ENCODE measurements at regions of chr21 and their contacts with region 1.

Region 1: GRCh38 chr21:46424039-46424591 is 34.6 kb upstream of the DIP2A start:
- DNase-seq: peak in 8 of 9 experiments; percentile 25 to 82 (median 52)
- ATAC-seq: peak; percentile 12
- H3K4me3 ChIP-seq: peak overlapping the region; percentile 18 to 30
- H3K4me3 Mint-ChIP-seq: peak overlapping the region; percentile 82
- H3K27ac ChIP-seq: peak overlapping the region; percentile 84 to 93
- H3K27ac Mint-ChIP-seq: peak overlapping the region; percentile 98
- H3K4me1 ChIP-seq: peaks cover 44% of the 10 kb centered on the region
- H3K4me1 Mint-ChIP-seq: peaks cover 35% of the 10 kb centered on the region
- H3K27me3 ChIP-seq: no peaks in the 10 kb centered on the region
- H3K27me3 Mint-ChIP-seq: no peaks in the 10 kb centered on the region
- CTCF ChIP-seq: no peak

Region 2: GRCh38 chr21:46368533-46369285 is 55.4 kb before region 1 on chr21:
- CTCF ChIA-PET with region 1: no interaction called
- POLR2A ChIA-PET with region 1: no interaction called
- intact Hi-C with region 1: loop called in 1 of 2 experiments (anchors 5 kb)
- DNase-seq: peak in 8 of 9 experiments; percentile 20 to 85 (median 52)
- ATAC-seq: peak; percentile 90
- H3K4me3 ChIP-seq: peak overlapping the region in 1 of 2 experiments; percentile 15
- H3K4me3 Mint-ChIP-seq: peak overlapping the region; percentile 40
- H3K27ac ChIP-seq: peak overlapping the region in 1 of 2 experiments; percentile 19
- H3K27ac Mint-ChIP-seq: peak overlapping the region; percentile 84
- H3K4me1 ChIP-seq: peaks cover 23% of the 10 kb centered on the region
- H3K4me1 Mint-ChIP-seq: peaks cover 24% of the 10 kb centered on the region
- H3K27me3 ChIP-seq: no peaks in the 10 kb centered on the region
- H3K27me3 Mint-ChIP-seq: no peaks in the 10 kb centered on the region
- CTCF ChIP-seq: no peak

Region 3: DNA sequence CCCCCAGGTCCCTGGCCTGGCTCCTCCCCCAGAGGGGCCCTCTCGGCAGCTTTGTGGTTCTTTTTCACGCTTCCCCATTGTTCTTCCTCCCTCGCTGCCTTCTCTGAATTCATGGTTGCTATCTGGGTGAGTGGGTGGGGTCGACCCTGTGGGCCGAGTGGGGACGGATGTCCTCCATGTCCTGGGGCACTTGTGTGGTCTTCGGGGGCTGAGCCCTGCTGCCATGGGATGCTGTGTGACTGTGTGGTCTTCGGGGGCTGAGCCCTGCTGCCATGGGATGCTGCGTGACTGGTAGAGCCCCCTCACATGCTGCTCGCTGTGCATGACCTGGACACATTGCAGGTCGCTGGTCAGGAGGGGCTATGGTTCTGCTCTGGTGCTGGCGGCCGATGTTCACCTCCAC is 13.0 kb after region 1 on chr21:
- CTCF ChIA-PET with region 1: interaction called, 4 read pairs
- POLR2A ChIA-PET with region 1: interaction called, 14 read pairs
- intact Hi-C with region 1: no loop called
- DNase-seq: no peak
- ATAC-seq: no peak
- H3K4me3 ChIP-seq: peak overlapping the region in 1 of 2 experiments; percentile 6
- H3K4me3 Mint-ChIP-seq: peak overlapping the region; percentile 63
- H3K27ac ChIP-seq: peak overlapping the region; percentile 8 to 28
- H3K27ac Mint-ChIP-seq: peak overlapping the region; percentile 89
- H3K4me1 ChIP-seq: peaks cover 25% of the 10 kb centered on the region
- H3K4me1 Mint-ChIP-seq: peaks cover 21% of the 10 kb centered on the region
- H3K27me3 ChIP-seq: no peaks in the 10 kb centered on the region
- H3K27me3 Mint-ChIP-seq: no peaks in the 10 kb centered on the region
- CTCF ChIP-seq: no peak

Region 4: DNA sequence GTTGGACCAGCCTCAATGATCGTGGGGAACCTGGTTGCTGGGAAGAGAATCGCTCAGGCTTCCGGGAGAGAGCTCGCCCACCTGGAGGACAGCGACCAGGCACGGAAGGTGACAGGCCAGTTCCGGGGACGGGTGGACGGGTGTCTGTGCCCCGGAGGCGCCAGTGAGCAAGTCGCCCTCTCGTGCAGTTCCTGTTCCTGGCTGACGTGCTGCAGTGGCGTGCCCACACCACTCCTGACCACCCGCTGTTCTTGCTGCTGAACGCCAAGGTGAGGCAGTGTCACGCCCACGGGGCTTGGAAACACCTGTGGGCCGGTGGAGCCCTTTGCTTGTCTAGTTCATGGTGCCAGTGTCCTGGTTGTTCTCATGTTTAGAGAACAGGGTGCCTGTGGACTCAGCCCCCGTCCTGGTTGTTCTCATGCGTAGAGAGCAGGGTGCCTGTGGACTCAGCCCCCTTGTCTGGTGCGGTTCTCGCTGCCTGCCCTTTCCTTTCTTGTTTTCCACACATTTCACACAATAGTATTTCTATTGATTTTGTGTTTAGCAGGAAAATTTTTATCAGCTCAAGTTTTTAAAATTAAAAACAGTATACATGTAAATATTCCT is 127.6 kb after region 1 on chr21:
- CTCF ChIA-PET with region 1: interaction called, 3 read pairs
- POLR2A ChIA-PET with region 1: interaction called, 4 read pairs
- intact Hi-C with region 1: loop called in 1 of 2 experiments (anchors 5 kb)
- DNase-seq: peak in 8 of 9 experiments; percentile 34 to 81 (median 55)
- ATAC-seq: peak; percentile 14
- H3K4me3 ChIP-seq: peak overlapping the region in 1 of 2 experiments; percentile 14
- H3K4me3 Mint-ChIP-seq: peak overlapping the region; percentile 66
- H3K27ac ChIP-seq: peak overlapping the region; percentile 59 to 84
- H3K27ac Mint-ChIP-seq: peak overlapping the region; percentile 99
- H3K4me1 ChIP-seq: peaks cover 84% of the 10 kb centered on the region
- H3K4me1 Mint-ChIP-seq: peaks cover 81% of the 10 kb centered on the region
- H3K27me3 ChIP-seq: no peaks in the 10 kb centered on the region
- H3K27me3 Mint-ChIP-seq: no peaks in the 10 kb centered on the region
- CTCF ChIP-seq: no peak